Activated CD8-positive, alpha-beta T cell treated with anti-CD3 and anti-CD28 coated beads, Interleukin-2, amount 10 ng/mL, durations not matched to agents 7 days and 5 days (primary cell): ENCODE measurements at regions of chr20 and their contacts with region 1.

Region 1: GRCh38 chr20:59087829-59088433 is 45.3 kb upstream of the PRELID3B start:
- DNase-seq: peak; percentile 89
- ATAC-seq: peak; percentile 76
- H3K4me3 Mint-ChIP-seq: no peak overlapping the region
- H3K27ac Mint-ChIP-seq: no peak overlapping the region
- H3K4me1 Mint-ChIP-seq: peaks cover 1% of the 10 kb centered on the region
- H3K27me3 Mint-ChIP-seq: peaks cover 11% of the 10 kb centered on the region

Region 2: DNA sequence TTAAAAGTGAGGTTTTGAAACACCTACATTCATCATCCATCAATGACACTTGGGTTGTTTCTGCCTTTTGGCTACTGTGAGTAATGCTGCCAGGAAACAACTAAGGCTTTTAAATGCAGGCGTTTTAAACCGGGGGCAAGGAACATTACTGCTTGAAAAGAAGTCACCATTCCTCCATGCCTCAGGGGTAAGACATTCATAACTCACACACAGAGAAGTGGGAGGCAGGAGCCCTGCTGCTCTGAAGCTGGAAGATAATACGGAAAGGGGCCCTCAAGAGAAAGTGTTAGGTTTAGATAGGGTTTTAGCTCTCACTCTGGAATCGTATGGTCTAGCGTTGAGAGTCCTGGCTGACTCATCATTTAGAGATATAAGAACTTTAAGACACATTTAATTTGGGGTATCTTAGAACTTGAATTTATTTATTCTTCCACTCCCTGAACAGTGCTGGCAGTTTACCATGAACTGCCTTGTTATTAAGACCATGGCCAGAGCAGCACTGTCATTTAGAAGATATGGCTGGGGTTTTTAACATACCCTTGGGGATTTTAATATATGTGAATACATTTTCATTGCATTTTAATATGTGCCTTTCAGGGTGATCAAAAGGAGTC is 66.9 kb before region 1 on chr20:
- CTCF ChIA-PET with region 1: no interaction called
- POLR2A ChIA-PET with region 1: no interaction called
- DNase-seq: no peak
- ATAC-seq: no peak
- H3K4me3 Mint-ChIP-seq: no peak overlapping the region
- H3K27ac Mint-ChIP-seq: no peak overlapping the region
- H3K4me1 Mint-ChIP-seq: peaks cover 22% of the 10 kb centered on the region
- H3K27me3 Mint-ChIP-seq: no peaks in the 10 kb centered on the region

Region 3: GRCh38 chr20:59075934-59076508 is 11.9 kb before region 1 on chr20:
- CTCF ChIA-PET with region 1: interaction called, 12 read pairs
- POLR2A ChIA-PET with region 1: no interaction called
- DNase-seq: no peak
- ATAC-seq: no peak
- H3K4me3 Mint-ChIP-seq: no peak overlapping the region
- H3K27ac Mint-ChIP-seq: no peak overlapping the region
- H3K4me1 Mint-ChIP-seq: peaks cover 34% of the 10 kb centered on the region
- H3K27me3 Mint-ChIP-seq: peaks cover 25% of the 10 kb centered on the region

Region 4: GRCh38 chr20:59120491-59120890 is 32.6 kb after region 1 on chr20:
- CTCF ChIA-PET with region 1: interaction called, 53 read pairs
- POLR2A ChIA-PET with region 1: no interaction called
- DNase-seq: peak; percentile 53
- ATAC-seq: peak; percentile 40
- H3K4me3 Mint-ChIP-seq: peak overlapping the region; percentile 3
- H3K27ac Mint-ChIP-seq: peak overlapping the region; percentile 0
- H3K4me1 Mint-ChIP-seq: peaks cover 73% of the 10 kb centered on the region
- H3K27me3 Mint-ChIP-seq: peaks cover 4% of the 10 kb centered on the region

Region 5: DNA sequence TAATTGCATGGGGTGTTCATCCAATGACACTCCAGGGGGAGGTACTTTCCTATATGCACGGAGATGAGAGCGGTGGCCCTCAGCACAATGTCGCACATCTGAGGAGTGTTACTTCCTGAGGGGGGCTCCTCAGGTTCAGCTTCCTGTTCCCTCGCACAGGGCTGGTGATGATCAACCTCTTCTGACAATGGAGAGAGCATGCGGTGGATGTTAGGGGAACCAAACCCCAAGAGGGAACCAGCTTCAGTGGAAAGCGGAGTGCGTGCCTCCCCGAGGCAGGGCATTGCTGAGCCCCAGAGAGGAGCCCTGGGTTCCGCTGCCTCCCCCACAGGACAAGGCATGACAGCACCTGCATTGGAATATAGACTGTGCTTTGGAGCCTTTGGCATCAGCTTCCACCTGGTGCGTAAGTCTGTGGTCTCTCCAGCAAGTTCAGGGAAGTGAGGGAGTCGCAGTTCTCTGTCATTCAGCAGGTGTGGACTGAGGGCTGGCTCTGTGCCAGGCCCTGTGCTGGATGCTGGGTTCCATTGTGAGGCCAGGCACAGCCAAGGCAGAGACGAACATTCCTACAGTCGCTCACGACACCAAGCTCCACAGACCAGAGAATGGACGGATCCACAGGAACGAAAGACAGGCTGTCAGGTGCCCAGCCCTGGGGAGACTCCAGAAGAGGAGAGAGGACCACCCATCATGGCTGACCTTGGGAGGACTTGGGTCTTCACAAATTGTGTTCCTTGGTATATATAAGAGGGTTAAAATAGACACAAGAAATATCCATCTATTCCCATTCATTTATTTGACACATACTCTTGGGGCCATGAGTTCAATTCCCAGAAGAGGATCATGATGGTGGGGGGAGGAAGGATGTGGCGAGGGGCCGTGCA is 71.8 kb after region 1 on chr20:
- CTCF ChIA-PET with region 1: interaction called, 25 read pairs
- POLR2A ChIA-PET with region 1: interaction called, 4 read pairs
- DNase-seq: peak; percentile 82
- ATAC-seq: peak; percentile 74
- H3K4me3 Mint-ChIP-seq: peak overlapping the region; percentile 89
- H3K27ac Mint-ChIP-seq: peak overlapping the region; percentile 97
- H3K4me1 Mint-ChIP-seq: peaks cover 67% of the 10 kb centered on the region
- H3K27me3 Mint-ChIP-seq: no peaks in the 10 kb centered on the region

Region 6: GRCh38 chr20:59177261-59178250 is 89.6 kb after region 1 on chr20:
- CTCF ChIA-PET with region 1: interaction called, 16 read pairs
- POLR2A ChIA-PET with region 1: no interaction called
- DNase-seq: peak; percentile 63
- ATAC-seq: peak; percentile 90
- H3K4me3 Mint-ChIP-seq: peak overlapping the region; percentile 48
- H3K27ac Mint-ChIP-seq: peak overlapping the region; percentile 86
- H3K4me1 Mint-ChIP-seq: peaks cover 73% of the 10 kb centered on the region
- H3K27me3 Mint-ChIP-seq: no peaks in the 10 kb centered on the region

Region 7: GRCh38 chr20:59222253-59223181 is 134.6 kb after region 1 on chr20:
- CTCF ChIA-PET with region 1: interaction called, 45 read pairs
- POLR2A ChIA-PET with region 1: no interaction called
- DNase-seq: peak; percentile 86
- ATAC-seq: peak; percentile 98
- H3K4me3 Mint-ChIP-seq: peak overlapping the region; percentile 73
- H3K27ac Mint-ChIP-seq: peak overlapping the region; percentile 61
- H3K4me1 Mint-ChIP-seq: peaks cover 17% of the 10 kb centered on the region
- H3K27me3 Mint-ChIP-seq: no peaks in the 10 kb centered on the region